Thyroid gland (tissue), 4 donors: ENCODE measurements at regions of chr4 and their contacts with region 1.

Region 1: GRCh38 chr4:125244848-125245450 is 69.8 kb upstream of the FAT4 start:
- DNase-seq: no peak
- H3K4me3 ChIP-seq: no peak overlapping the region
- H3K27ac ChIP-seq: no peak overlapping the region
- H3K4me1 ChIP-seq: no peaks in the 10 kb centered on the region
- H3K27me3 ChIP-seq: no peaks in the 10 kb centered on the region
- CTCF ChIP-seq: peak in 4 of 6 experiments; percentile 4 to 50 (median 42)
- POLR2A ChIP-seq: no peak

Region 2: DNA sequence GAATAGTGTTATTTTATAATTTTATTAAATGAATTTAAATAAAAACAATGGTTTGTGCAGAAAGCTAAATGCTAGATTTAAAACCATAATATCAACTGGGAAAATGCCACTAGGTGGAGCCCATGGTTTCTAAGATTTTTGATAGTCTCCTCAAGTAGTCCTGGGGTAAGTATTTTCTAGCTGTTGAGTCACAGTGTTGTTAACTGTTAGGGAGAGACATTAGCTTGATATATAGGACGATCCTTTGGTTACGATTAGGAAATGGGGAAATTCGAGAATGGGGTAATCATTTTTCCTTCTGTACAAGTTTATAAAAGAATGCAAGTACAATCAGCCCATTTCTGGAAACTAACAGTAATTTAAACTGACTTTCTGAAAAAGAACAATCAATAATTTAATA is 910.8 kb before region 1 on chr4:
- intact Hi-C with region 1: loop called (anchors 5 kb)
- DNase-seq: peak; percentile 27 to 34
- H3K4me3 ChIP-seq: no peak overlapping the region
- H3K27ac ChIP-seq: no peak overlapping the region
- H3K4me1 ChIP-seq: no peaks in the 10 kb centered on the region
- H3K27me3 ChIP-seq: no peaks in the 10 kb centered on the region
- CTCF ChIP-seq: peak in 5 of 6 experiments; percentile 30 to 71 (median 63)
- POLR2A ChIP-seq: no peak